ENCODE measurements at regions of chr4 and their contacts with region 1.

Region 1: DNA sequence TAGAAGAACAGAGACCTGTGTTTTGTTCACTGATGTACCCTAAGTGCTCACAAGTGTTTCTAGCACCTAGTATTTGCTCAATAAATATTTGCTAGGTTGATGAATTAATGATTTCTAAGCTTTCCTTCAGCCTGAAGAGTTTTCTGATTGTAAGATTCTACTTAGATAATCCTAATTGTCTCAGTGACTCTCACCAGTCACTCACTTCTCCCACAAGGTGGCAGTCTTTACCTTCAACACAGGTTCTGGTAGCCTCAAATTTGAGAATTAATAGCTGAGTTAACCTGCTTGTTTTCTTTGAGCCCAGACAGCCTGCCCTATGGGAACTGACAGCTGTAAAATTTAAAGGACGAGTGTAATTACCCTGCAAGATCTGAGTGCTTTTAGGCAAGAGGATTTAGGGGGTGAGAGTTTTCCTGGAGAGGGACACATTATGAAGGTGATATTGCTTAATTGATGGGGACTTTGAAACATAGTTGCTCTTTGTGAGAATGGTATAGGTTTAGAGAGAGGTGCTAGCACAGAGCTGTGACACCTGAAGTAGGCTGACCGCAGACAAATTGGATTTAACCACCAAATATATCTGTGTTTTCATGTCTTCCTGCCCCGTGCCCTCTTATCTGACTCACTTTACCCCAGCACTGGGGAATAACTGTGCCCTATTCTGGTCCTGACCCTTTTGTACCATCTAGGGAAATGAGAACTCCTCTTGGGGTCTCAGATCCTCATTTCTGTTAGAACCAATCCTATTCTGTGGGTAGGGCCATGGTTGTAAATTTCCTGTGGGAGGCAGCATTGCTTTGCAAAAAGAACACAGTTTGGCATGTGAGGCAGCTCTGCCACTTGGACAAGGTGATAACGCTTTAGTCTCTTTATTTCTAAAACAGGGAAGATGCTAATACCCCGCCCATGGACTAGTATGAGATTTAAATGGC is 27.7 kb downstream of the CD38 start:
- H3K4me3 ChIP-seq: no peak overlapping the region
- H3K27ac ChIP-seq: no peak overlapping the region
- H3K4me1 ChIP-seq: no peaks in the 10 kb centered on the region
- CTCF ChIP-seq: peak; percentile 30; the same call in 1 of the 2 replicates

Region 2: GRCh38 chr4:15479089-15479912 is 326.5 kb before region 1 on chr4:
- CTCF ChIA-PET with region 1: interaction called, 11 read pairs
- POLR2A ChIA-PET with region 1: no interaction called
- H3K4me3 ChIP-seq: peak overlapping the region; percentile 48
- H3K27ac ChIP-seq: peak overlapping the region; percentile 51; the same call in 1 of the 2 replicates
- H3K4me1 ChIP-seq: no peaks in the 10 kb centered on the region; the same call in 1 of the 2 replicates
- CTCF ChIP-seq: peak; percentile 55; the same call in 1 of the 2 replicates

Region 3: DNA sequence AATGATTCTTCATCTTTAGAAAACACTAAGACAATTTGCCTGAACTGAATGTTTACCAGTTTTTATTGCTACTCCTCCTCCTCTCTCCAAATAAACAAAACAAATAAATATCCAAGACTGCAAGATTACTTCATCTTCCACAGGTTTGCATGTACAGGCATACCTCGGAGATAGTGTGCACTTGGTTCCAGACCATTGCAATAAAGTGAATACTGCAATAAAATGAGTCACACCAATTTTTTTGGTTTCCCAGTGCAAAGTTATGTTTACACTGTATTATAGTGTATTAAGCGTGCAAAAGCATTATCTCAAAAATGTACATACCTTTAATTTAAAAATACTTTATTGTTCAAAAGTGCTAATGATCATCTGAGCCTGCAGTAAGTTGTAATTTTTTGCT is 204.0 kb before region 1 on chr4:
- CTCF ChIA-PET with region 1: no interaction called
- POLR2A ChIA-PET with region 1: no interaction called
- H3K4me3 ChIP-seq: no peak overlapping the region
- H3K27ac ChIP-seq: no peak overlapping the region
- H3K4me1 ChIP-seq: no peaks in the 10 kb centered on the region
- CTCF ChIP-seq: no peak

Region 4: DNA sequence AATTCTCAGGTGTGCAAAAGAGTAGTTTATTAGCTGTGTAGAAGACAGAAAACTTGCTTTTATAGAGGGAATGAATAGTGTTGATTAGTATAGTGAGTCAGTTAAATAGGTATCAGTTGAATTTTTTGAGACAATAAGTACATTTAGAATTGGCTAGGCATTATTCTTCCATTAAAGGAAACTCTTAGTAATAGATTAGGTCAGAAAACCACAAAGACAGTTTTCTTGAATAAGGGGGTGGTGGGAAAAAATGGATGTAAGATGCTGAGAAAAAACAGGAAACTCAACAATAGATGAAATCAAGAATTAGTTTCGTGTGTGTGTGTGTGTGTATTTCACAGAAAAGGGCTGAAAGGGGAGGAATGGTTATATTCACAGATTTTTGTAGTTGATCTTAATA is 10.9 kb before region 1 on chr4:
- CTCF ChIA-PET with region 1: interaction called, 13 read pairs
- POLR2A ChIA-PET with region 1: no interaction called
- H3K4me3 ChIP-seq: no peak overlapping the region
- H3K27ac ChIP-seq: no peak overlapping the region
- H3K4me1 ChIP-seq: no peaks in the 10 kb centered on the region
- CTCF ChIP-seq: no peak

Region 5: GRCh38 chr4:16001484-16001858 is 195.6 kb after region 1 on chr4:
- CTCF ChIA-PET with region 1: interaction called, 19 read pairs
- POLR2A ChIA-PET with region 1: no interaction called
- H3K4me3 ChIP-seq: no peak overlapping the region
- H3K27ac ChIP-seq: no peak overlapping the region
- H3K4me1 ChIP-seq: no peaks in the 10 kb centered on the region
- CTCF ChIP-seq: peak; percentile 83

Region 6: DNA sequence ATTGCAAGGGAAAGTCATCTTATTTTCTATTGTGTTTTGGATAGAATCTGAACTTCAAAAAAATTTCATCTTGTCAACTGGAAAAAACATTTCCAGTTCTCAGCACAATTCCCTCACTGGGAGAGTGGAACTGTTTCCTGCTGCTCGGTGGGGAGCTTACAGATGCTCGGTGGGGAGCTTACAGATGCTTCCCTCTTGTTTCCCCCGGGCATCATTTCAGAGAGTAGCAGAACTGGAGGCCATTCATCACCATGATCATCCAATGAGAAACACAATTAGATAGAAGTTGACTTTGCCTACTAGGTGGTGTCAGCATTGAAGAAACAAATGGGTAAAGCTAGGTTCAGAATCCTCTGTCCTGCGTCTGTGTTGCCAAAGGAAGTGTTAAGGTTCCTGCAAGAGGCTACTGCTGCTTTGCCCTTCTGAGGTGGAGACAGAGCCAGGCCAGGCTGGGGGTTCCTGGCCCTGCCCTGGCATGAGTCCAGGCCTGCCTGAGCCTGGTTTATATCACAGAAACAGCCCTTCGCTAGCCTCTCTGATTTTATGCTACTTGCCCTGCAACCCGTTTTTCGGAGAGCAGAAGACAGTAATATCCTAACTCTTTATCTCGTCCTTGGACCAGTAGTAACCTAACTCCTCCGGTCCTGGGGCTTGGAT is 349.8 kb after region 1 on chr4:
- CTCF ChIA-PET with region 1: no interaction called
- POLR2A ChIA-PET with region 1: no interaction called
- H3K4me3 ChIP-seq: no peak overlapping the region
- H3K27ac ChIP-seq: no peak overlapping the region
- H3K4me1 ChIP-seq: no peaks in the 10 kb centered on the region
- CTCF ChIP-seq: no peak